ENCODE measurements at regions of chr20 and their contacts with region 1.

Region 1: GRCh38 chr20:36808317-36809257 is 35.0 kb upstream of the DSN1 start:
- DNase-seq: peak; percentile 82

Region 2: DNA sequence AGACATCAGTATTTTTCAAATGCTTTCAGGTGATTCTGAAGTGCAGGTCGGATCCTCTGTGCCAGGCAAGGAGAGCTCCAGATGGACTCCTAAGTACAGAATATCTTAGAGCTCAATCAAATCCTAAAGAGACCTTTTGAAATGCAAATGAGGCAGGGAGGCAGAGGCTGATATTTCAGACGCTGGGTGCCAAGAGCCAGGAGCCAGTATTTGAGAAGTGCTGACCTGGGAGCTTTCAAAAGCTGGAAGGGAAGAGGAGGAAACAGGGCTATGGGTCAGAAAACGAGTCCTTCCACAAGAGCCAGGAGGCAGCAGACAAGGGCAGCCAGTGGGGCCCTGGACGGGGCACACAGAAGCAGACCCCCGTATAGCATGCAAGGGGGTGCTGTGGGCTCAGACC is 11.1 kb after region 1 on chr20:
- CTCF ChIA-PET with region 1: interaction called, 12 read pairs
- POLR2A ChIA-PET with region 1: no interaction called
- DNase-seq: no peak